Uterus (tissue), 4 donors: ENCODE measurements at regions of chr2 and their contacts with region 1.

Region 1: DNA sequence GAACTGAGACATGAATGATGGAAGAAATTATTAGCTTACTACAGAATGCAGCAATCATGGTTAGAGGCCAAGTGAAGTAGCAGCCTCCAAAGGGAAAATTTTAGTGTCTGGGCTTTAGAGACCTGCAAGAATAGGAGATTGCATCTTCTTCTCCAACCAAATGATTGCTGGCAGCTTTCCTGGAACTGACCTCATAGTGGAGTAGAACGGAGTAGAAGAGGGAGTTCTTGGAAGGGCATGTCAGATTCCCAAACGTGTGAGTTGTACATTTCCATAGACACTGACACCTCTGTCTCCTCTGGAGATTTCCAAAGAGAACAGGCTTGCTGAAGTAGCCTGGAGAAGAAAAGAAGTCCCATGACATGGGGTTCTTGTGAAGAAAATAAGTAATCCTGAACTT is 169.8 kb upstream of the ERBB4 start:
- DNase-seq: no peak
- H3K4me3 ChIP-seq: no peak overlapping the region
- H3K27ac ChIP-seq: no peak overlapping the region
- H3K4me1 ChIP-seq: no peaks in the 10 kb centered on the region
- H3K27me3 ChIP-seq: no peaks in the 10 kb centered on the region
- CTCF ChIP-seq: no peak
- POLR2A ChIP-seq: no peak

Region 2: GRCh38 chr2:212727751-212728150 is 19.4 kb after region 1 on chr2:
- intact Hi-C with region 1: loop called (anchors 1 kb)
- DNase-seq: no peak
- H3K4me3 ChIP-seq: no peak overlapping the region
- H3K27ac ChIP-seq: no peak overlapping the region
- H3K4me1 ChIP-seq: no peaks in the 10 kb centered on the region
- H3K27me3 ChIP-seq: no peaks in the 10 kb centered on the region
- CTCF ChIP-seq: no peak
- POLR2A ChIP-seq: no peak